ENCODE measurements at regions of chr1 and their contacts with region 1.

Region 1: DNA sequence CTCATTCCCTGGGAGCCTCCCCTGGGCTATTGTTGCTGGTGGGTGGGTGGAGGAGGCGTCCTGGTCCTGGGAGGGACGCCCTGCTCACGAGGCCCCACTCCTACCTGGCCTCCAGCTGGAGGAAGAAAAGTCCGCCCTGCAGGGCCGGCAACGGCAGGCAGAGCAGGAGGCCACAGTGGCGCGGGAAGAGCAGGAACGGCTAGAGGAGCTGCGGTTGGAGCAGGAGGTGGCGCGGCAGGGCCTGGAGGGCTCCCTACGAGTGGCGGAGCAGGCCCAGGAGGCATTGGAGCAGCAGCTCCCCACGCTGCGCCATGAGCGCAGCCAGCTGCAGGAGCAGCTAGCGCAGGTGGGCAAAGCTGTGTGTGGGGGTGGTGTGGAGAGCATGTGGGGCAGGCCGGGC is 24.9 kb downstream of the CROCC start:
- DNase-seq: no peak
- ATAC-seq: peak in 1 of 4 donors; percentile 15
- H3K4me3 ChIP-seq: no peak overlapping the region
- H3K27ac ChIP-seq: no peak overlapping the region
- H3K4me1 ChIP-seq: peaks cover 0 to 4% (median 0%) of the 10 kb centered on the region in 12 donors
- H3K27me3 ChIP-seq: no peaks in the 10 kb centered on the region
- CTCF ChIP-seq: no peak
- POLR2A ChIP-seq: no peak

Region 2: GRCh38 chr1:16618719-16619118 is 327.9 kb before region 1 on chr1:
- intact Hi-C with region 1: loop called in 6 of 10 experiments (anchors 2 to 5 kb)
- DNase-seq: peak; percentile 5 to 74 (median 22)
- ATAC-seq: no peak
- H3K4me3 ChIP-seq: no peak overlapping the region
- H3K27ac ChIP-seq: no peak overlapping the region
- H3K4me1 ChIP-seq: peaks cover 0 to 6% (median 5%) of the 10 kb centered on the region in 12 donors
- H3K27me3 ChIP-seq: peaks cover 0 to 8% (median 0%) of the 10 kb centered on the region in 9 donors
- CTCF ChIP-seq: no peak
- POLR2A ChIP-seq: no peak

Region 3: DNA sequence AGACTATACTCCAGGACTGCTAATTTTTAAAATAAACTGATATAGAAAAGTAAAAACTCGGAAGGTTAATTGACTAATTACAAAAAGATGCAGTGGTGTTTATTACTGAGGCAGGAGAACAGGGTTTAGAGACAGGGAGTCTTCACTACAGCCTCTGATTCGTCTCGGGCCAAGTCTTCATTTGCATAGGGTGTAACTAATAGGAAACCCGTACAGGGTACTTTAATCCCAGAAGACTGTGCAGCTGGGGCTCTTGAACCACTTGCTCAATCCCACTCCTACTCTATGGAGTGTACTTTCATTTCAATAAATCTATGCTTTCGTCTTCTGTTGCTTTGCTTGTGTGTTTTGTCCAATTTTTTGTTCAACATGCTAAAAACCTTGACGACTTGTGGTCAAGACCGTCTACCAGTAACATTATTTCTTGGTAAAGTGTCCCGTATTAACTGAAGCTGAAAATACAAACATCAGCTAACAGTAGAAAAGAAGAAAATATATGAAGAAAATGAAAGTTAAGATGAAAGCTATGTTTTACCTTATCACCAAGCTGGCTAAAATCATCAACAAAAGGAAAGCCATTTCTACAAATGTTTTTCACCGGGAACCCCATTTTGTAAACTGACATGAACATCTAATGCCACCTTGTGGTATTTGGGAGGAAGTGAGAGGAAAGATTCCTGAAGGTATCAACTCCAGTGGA is 99.1 kb after region 1 on chr1:
- intact Hi-C with region 1: loop called in 8 of 10 experiments (anchors 1 to 5 kb)
- DNase-seq: no peak
- ATAC-seq: peak; percentile 40 to 76 (median 62)
- H3K4me3 ChIP-seq: peak overlapping the region in 8 of 12 donors; percentile 9 to 40 (median 22)
- H3K27ac ChIP-seq: peak overlapping the region in 4 of 12 donors; percentile 12 to 45 (median 26)
- H3K4me1 ChIP-seq: peaks cover 0 to 30% (median 10%) of the 10 kb centered on the region in 12 donors
- H3K27me3 ChIP-seq: no peaks in the 10 kb centered on the region
- CTCF ChIP-seq: peak; percentile 61 to 83 (median 76)
- POLR2A ChIP-seq: no peak

Region 4: GRCh38 chr1:17236779-17237560 is 290.3 kb after region 1 on chr1:
- intact Hi-C with region 1: loop called in 4 of 10 experiments (anchors 2 to 10 kb)
- DNase-seq: peak; percentile 79 to 89 (median 81)
- ATAC-seq: peak; percentile 64 to 86 (median 84)
- H3K4me3 ChIP-seq: no peak overlapping the region
- H3K27ac ChIP-seq: no peak overlapping the region
- H3K4me1 ChIP-seq: peaks cover 0 to 9% (median 0%) of the 10 kb centered on the region in 12 donors
- H3K27me3 ChIP-seq: peaks cover 0 to 44% (median 6%) of the 10 kb centered on the region in 9 donors
- CTCF ChIP-seq: peak; percentile 75 to 91 (median 84)
- POLR2A ChIP-seq: no peak

Region 5: GRCh38 chr1:17587989-17588685 is 641.5 kb after region 1 on chr1:
- intact Hi-C with region 1: no loop called
- DNase-seq: peak; percentile 72 to 88 (median 76)
- ATAC-seq: peak; percentile 83 to 91 (median 87)
- H3K4me3 ChIP-seq: peak overlapping the region in 9 of 12 donors; percentile 12 to 51 (median 35)
- H3K27ac ChIP-seq: peak overlapping the region; percentile 40 to 92 (median 83)
- H3K4me1 ChIP-seq: peaks cover 0 to 65% (median 36%) of the 10 kb centered on the region in 12 donors
- H3K27me3 ChIP-seq: no peaks in the 10 kb centered on the region
- CTCF ChIP-seq: no peak
- POLR2A ChIP-seq: no peak

Measured in heart left ventricle (tissue), 16 donors.